Activated CD4-positive, alpha-beta memory T cell treated with anti-CD3 and anti-CD28 coated beads, Interleukin-2, amount 10 ng/mL, durations not matched to agents 7 days and 5 days (primary cell): ENCODE measurements at regions of chr1 and their contacts with region 1.

Region 1: GRCh38 chr1:44812822-44813543 is 4.7 kb downstream of the BTBD19 start:
- DNase-seq: no peak
- H3K4me3 Mint-ChIP-seq: peak overlapping the region; percentile 83
- H3K27ac Mint-ChIP-seq: peak overlapping the region; percentile 98
- H3K4me1 Mint-ChIP-seq: peaks cover 70% of the 10 kb centered on the region
- H3K27me3 Mint-ChIP-seq: no peaks in the 10 kb centered on the region

Region 2: GRCh38 chr1:44485229-44485933 is 327.6 kb before region 1 on chr1:
- CTCF ChIA-PET with region 1: no interaction called
- POLR2A ChIA-PET with region 1: no interaction called
- DNase-seq: no peak
- H3K4me3 Mint-ChIP-seq: no peak overlapping the region
- H3K27ac Mint-ChIP-seq: no peak overlapping the region
- H3K4me1 Mint-ChIP-seq: no peaks in the 10 kb centered on the region
- H3K27me3 Mint-ChIP-seq: peaks cover 26% of the 10 kb centered on the region

Region 3: GRCh38 chr1:44786138-44786840 is 26.7 kb before region 1 on chr1:
- CTCF ChIA-PET with region 1: interaction called, 18 read pairs
- POLR2A ChIA-PET with region 1: interaction called, 195 read pairs
- DNase-seq: peak; percentile 78
- H3K4me3 Mint-ChIP-seq: peak overlapping the region; percentile 59
- H3K27ac Mint-ChIP-seq: no peak overlapping the region
- H3K4me1 Mint-ChIP-seq: peaks cover 36% of the 10 kb centered on the region
- H3K27me3 Mint-ChIP-seq: no peaks in the 10 kb centered on the region

Region 4: DNA sequence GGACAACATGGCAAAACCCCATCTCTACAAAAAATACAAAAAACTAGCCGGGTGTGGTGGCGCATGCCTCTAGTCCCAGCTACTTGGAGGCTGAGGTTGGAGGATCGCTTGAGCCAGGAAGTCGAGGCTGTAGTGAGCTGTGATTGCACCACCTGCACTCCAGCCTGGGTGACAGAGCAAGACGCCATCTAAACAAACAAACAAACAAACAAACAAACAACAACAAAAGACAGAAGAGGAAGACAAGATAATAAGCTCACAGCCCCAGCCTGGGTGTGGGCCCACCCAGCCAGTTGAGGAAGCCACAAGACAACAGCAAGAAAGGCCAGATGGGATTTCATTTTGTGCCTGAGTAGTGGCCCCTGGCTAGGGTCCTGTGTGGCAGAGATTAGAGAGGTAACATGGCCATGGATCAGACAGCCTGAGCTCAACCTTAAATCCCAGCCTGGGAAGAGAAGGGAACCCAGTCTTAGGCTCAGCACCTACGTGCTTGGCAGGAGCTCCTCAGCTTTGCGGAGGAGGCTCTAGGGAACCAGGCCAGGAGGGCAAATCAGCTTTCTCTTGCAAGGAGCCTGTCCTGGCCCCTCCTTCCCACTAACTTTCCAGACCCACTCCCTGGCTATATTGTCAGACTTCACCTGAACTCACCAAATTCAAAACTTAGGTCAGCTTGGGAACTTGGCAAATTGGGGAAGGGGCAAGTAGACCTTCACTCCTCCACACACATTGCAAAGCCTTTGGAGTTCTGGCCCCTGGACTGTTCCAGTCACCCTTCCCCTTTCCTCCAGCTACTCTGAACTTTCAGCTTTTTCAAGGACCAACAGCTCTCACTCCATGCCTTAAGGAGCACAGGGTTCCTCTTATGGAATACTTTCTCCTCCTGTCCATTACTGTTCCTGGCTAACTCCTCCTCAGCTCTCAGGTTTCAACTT is 19.9 kb before region 1 on chr1:
- CTCF ChIA-PET with region 1: interaction called, 76 read pairs
- POLR2A ChIA-PET with region 1: interaction called, 960 read pairs
- DNase-seq: no peak
- H3K4me3 Mint-ChIP-seq: no peak overlapping the region
- H3K27ac Mint-ChIP-seq: no peak overlapping the region
- H3K4me1 Mint-ChIP-seq: peaks cover 2% of the 10 kb centered on the region
- H3K27me3 Mint-ChIP-seq: no peaks in the 10 kb centered on the region

Region 5: GRCh38 chr1:44799770-44800584 is 13.0 kb before region 1 on chr1 and contains the start of gene PLK3:
- CTCF ChIA-PET with region 1: interaction called, 76 read pairs
- POLR2A ChIA-PET with region 1: interaction called, 960 read pairs
- DNase-seq: peak; percentile 98
- H3K4me3 Mint-ChIP-seq: peak within 1 kb of the TSS; percentile 90
- H3K27ac Mint-ChIP-seq: peak within 1 kb of the TSS; percentile 98
- H3K4me1 Mint-ChIP-seq: peaks cover 47% of the 10 kb centered on the region
- H3K27me3 Mint-ChIP-seq: no peaks in the 10 kb centered on the region
- total RNA-seq, gene PLK3: 62.8 to 63.5 TPM